Lower lobe of right lung (tissue), 2 donors: ENCODE measurements at regions of chr11 and their contacts with region 1.

Region 1: GRCh38 chr11:66834501-66834845 is 8.8 kb upstream of the RCE1 start:
- DNase-seq: no peak
- ATAC-seq: no peak
- H3K4me3 ChIP-seq: no peak overlapping the region
- H3K27ac ChIP-seq: no peak overlapping the region
- H3K4me1 ChIP-seq: peaks cover 4% of the 10 kb centered on the region
- H3K27me3 ChIP-seq: no peaks in the 10 kb centered on the region
- CTCF ChIP-seq: no peak

Region 2: DNA sequence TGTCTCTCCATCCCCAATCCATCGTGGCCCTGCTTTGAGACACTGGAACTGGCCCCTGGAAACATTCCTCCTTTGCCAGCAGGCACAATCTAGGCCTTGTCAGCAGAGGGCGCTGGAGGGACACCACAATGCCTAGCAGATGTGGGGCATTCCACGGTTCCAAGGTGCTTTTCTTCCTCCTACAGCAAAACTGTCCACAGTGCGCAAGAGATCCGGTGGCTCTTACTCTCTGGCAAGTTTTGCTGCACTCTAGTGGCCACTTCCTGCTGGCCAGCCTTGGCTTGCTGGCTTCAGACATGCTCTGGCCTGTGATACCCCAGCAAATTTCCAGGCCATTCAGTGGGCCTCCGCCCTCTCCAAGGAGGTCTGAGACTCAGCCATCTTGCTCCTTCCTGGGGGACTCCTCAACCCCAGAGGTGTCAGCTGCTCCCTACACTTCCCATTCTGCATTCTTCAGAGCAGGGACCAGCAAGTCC is 139.7 kb before region 1 on chr11:
- intact Hi-C with region 1: loop called (anchors 5 kb)
- DNase-seq: peak; percentile 88
- ATAC-seq: peak; percentile 91 to 95
- H3K4me3 ChIP-seq: no peak overlapping the region
- H3K27ac ChIP-seq: no peak overlapping the region
- H3K4me1 ChIP-seq: no peaks in the 10 kb centered on the region
- H3K27me3 ChIP-seq: no peaks in the 10 kb centered on the region
- CTCF ChIP-seq: peak; percentile 90

Region 3: DNA sequence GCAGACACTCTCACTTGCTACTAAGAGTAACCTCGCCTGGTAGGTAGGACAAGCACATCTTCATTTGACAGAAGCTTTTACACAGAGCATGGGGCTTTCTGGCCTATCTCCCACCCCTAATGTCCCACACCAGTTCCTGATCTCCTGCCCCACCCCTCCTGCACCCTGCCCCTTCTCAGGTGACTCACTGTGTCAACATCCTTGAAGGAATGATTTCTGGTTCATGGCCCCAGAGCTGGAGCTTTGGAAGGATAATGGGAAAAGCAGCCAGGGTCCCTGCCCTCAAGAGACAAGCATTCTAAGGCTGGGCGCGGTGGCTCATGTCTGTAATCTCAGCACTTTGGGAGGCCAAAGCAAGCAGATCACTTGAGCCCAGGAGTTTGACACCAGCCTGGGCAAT is 69.6 kb after region 1 on chr11:
- intact Hi-C with region 1: no loop called
- DNase-seq: no peak
- ATAC-seq: no peak
- H3K4me3 ChIP-seq: no peak overlapping the region
- H3K27ac ChIP-seq: no peak overlapping the region
- H3K4me1 ChIP-seq: no peaks in the 10 kb centered on the region
- H3K27me3 ChIP-seq: no peaks in the 10 kb centered on the region
- CTCF ChIP-seq: no peak